ENCODE measurements at regions of chr1 and their contacts with region 1.

Region 1: DNA sequence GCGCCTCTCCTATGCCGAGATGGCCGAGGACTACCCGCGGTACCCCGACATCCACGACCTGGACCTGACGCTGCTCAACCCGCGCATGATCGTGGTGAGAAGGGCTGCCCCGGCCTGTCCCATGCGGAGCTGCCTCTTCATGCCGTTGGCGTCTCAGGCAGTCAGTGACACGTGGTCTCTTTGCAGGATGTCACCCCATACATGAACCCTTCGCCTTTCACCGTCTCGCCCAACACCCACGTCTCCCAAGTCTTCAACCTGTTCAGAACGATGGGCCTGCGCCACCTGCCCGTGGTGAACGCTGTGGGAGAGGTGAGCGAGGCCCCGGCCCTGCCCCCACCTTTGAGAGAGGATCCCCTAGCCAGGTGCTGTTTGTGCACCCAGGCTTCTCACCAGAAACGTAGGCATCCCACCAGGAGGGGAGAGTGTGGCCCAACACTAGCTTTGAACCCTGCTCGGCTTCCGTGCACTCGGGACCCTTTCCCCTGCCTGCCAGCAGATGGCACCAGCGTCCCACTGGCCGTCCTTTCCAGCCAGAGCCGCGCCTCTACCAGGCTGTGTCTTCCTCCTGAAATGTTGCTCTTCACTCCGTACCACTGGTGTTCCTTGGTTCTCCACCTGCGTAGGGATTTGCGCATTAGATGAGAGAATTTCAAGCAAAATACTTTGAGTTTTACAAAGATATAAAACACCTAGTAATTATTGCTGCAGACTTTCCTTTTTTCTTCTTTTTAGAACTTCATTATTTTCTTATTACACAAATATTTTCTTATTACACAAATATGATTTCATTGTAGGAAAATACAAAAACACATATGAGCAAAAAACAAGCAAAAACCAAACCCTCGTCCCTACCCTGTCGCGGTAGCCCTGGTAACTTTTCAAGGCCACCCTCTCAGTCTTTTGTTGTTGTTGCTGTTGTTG is 9.0 kb downstream of the NPPA start:
- DNase-seq: peak; percentile 89
- ATAC-seq: peak; percentile 87

Region 2: DNA sequence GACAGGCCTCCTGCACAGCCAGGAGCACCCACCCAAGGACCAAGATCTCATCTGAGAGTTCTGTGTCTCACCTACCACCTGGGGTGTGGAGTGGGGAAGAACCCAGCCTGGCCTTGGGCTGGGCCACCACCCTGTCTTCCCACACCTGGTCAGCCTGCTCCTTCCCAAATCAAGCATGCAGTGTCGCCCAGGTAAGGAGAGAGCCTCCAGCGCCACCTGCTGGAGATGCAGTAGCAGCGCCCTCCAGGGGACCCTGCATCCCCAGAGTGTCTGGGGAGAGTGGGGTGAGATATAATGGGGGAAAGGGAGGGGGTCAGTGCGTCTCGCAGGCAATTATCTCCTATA is 55.3 kb after region 1 on chr1:
- intact Hi-C with region 1: loop called (anchors 1 kb)
- DNase-seq: peak; percentile 88
- ATAC-seq: peak; percentile 92

Region 3: GRCh38 chr1:11907275-11908094 is 68.9 kb after region 1 on chr1:
- intact Hi-C with region 1: loop called (anchors 5 kb)
- DNase-seq: peak; percentile 91
- ATAC-seq: peak; percentile 91

Region 4: DNA sequence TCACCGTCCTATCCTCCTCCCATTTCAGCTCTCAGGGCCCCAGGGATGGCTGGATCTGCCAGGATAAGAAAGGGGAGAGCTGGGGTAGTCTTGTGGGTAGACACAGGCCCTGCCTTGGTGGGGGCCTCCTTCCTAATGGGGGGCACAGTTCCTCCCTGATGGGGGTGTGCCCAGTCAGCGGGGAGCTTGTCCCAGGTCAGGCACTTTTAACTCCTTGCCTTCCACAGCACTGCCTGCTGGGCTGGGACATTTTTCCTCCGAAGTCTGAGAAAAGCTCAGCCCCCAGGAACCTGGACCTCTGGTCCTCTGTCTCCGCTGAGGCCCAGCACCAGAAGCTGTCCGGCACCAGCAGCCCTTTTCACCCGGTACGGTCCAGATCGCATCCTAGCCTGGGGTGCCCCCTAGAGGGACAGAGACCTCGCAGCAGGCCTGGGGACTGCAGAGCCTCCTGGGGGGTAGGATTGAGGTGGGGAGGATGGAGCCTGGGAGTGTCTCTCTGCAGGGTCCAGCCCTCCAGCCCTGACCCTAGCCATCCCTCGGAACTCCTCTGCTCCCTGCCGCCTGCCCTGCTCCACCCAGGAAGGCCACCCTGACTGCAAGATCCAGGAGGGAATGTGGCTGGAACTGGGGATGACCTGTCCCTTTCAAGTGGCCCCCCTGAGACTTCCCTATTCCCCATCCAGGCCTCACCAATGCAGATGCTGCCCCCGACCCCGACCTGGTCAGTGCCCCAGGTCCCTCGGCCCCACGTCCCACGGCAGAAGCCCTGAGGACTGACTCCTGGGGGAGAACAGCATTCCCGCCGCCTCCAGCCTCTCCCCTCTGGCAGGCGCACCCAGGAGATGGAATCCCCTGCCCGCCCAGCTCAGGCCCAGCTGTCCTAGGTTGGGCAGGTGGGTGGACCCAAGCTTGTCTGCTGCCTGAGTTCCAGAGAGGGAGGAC is 192.7 kb after region 1 on chr1:
- intact Hi-C with region 1: loop called (anchors 10 kb)
- DNase-seq: no peak
- ATAC-seq: peak; percentile 62

Measured in Right ventricle myocardium inferior (tissue), 1 donor.